Activated CD4-positive, alpha-beta T cell treated with anti-CD3 and anti-CD28 coated beads for 36 hours (primary cell): ENCODE measurements at regions of chr17 and their contacts with region 1.

Region 1: GRCh38 chr17:42484304-42484703 is 25.6 kb downstream of the ATP6V0A1 start:
- DNase-seq: peak; percentile 87
- ATAC-seq: peak; percentile 97
- H3K4me3 Mint-ChIP-seq: no peak overlapping the region
- H3K27ac Mint-ChIP-seq: no peak overlapping the region
- H3K4me1 Mint-ChIP-seq: peaks cover 27% of the 10 kb centered on the region
- H3K27me3 Mint-ChIP-seq: no peaks in the 10 kb centered on the region

Region 2: DNA sequence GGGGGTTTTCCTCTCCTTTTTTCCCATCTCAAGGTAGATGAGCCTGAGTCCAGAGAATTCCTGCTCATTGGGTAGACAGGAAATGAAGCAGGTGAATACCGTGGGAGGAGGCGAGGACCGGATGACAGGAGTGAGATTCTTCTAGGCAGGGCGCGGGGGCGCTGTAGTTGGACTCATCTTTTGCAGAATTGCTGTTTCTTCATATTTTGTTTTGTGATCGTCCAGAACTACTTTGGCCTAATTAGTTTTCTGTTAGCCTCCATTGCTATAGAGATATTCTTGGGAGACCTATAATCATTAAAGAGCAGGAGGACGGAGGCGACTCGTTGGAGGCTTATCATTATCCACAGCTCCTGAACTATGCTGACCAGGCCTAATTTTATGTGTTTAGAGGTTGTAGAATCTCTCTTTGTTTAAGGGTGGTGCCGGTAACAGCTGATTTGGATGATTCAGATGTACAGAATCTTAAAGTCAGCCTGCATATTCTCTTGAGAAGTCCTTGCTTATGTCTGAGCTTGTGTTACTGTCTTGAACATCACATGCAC is 25.0 kb before region 1 on chr17:
- CTCF ChIA-PET with region 1: no interaction called
- POLR2A ChIA-PET with region 1: no interaction called
- intact Hi-C with region 1: loop called in 1 of 2 experiments (anchors 1 kb)
- DNase-seq: peak; percentile 68
- ATAC-seq: no peak
- H3K4me3 Mint-ChIP-seq: peak overlapping the region; percentile 86
- H3K27ac Mint-ChIP-seq: peak overlapping the region; percentile 91
- H3K4me1 Mint-ChIP-seq: peaks cover 46% of the 10 kb centered on the region
- H3K27me3 Mint-ChIP-seq: no peaks in the 10 kb centered on the region

Region 3: GRCh38 chr17:42498828-42499227 is 14.5 kb after region 1 on chr17:
- CTCF ChIA-PET with region 1: interaction called, 3 read pairs
- POLR2A ChIA-PET with region 1: interaction called, 14 read pairs
- intact Hi-C with region 1: no loop called
- DNase-seq: no peak
- ATAC-seq: no peak
- H3K4me3 Mint-ChIP-seq: no peak overlapping the region
- H3K27ac Mint-ChIP-seq: no peak overlapping the region
- H3K4me1 Mint-ChIP-seq: no peaks in the 10 kb centered on the region
- H3K27me3 Mint-ChIP-seq: no peaks in the 10 kb centered on the region

Region 4: GRCh38 chr17:42754782-42755181 is 270.5 kb after region 1 on chr17:
- CTCF ChIA-PET with region 1: no interaction called
- POLR2A ChIA-PET with region 1: no interaction called
- intact Hi-C with region 1: no loop called
- DNase-seq: no peak
- ATAC-seq: no peak
- H3K4me3 Mint-ChIP-seq: no peak overlapping the region
- H3K27ac Mint-ChIP-seq: no peak overlapping the region
- H3K4me1 Mint-ChIP-seq: peaks cover 2% of the 10 kb centered on the region
- H3K27me3 Mint-ChIP-seq: peaks cover 27% of the 10 kb centered on the region